HEK293 (cell line): ENCODE measurements at regions of chr14 and their contacts with region 1.

Region 1: GRCh38 chr14:65019944-65020566 is 33.4 kb downstream of the FNTB start:
- H3K4me3 ChIP-seq: no peak overlapping the region
- H3K27ac ChIP-seq: no peak overlapping the region
- H3K4me1 ChIP-seq: peaks cover 4% of the 10 kb centered on the region
- CTCF ChIP-seq: peak; percentile 72; the same call in 1 of the 2 replicates

Region 2: GRCh38 chr14:64986578-64987571 is 33.2 kb before region 1 on chr14 and contains the start of gene FNTB:
- CTCF ChIA-PET with region 1: interaction called, 37 read pairs
- POLR2A ChIA-PET with region 1: interaction called, 6 read pairs
- H3K4me3 ChIP-seq: peak within 1 kb of the TSS; percentile 85
- H3K27ac ChIP-seq: peak within 1 kb of the TSS; percentile 61
- H3K4me1 ChIP-seq: peaks cover 3% of the 10 kb centered on the region; the same call in 1 of the 2 replicates
- CTCF ChIP-seq: peak; percentile 89

Region 3: GRCh38 chr14:64997108-64997794 is 22.8 kb before region 1 on chr14:
- CTCF ChIA-PET with region 1: interaction called, 17 read pairs
- POLR2A ChIA-PET with region 1: no interaction called
- H3K4me3 ChIP-seq: no peak overlapping the region
- H3K27ac ChIP-seq: no peak overlapping the region
- H3K4me1 ChIP-seq: no peaks in the 10 kb centered on the region
- CTCF ChIP-seq: no peak

Region 4: GRCh38 chr14:65006261-65006721 is 13.8 kb before region 1 on chr14:
- CTCF ChIA-PET with region 1: interaction called, 11 read pairs
- POLR2A ChIA-PET with region 1: no interaction called
- H3K4me3 ChIP-seq: no peak overlapping the region
- H3K27ac ChIP-seq: no peak overlapping the region
- H3K4me1 ChIP-seq: peaks cover 13% of the 10 kb centered on the region
- CTCF ChIP-seq: no peak

Region 5: GRCh38 chr14:65117769-65118701 is 98.0 kb after region 1 on chr14:
- CTCF ChIA-PET with region 1: no interaction called
- POLR2A ChIA-PET with region 1: no interaction called
- H3K4me3 ChIP-seq: no peak overlapping the region
- H3K27ac ChIP-seq: no peak overlapping the region
- H3K4me1 ChIP-seq: no peaks in the 10 kb centered on the region
- CTCF ChIP-seq: no peak